Left colon (tissue), 2 donors: ENCODE measurements at regions of chr19 and their contacts with region 1.

Region 1: GRCh38 chr19:6292006-6292405 is 12.2 kb upstream of the MLLT1 start:
- DNase-seq: no peak
- ATAC-seq: no peak

Region 2: DNA sequence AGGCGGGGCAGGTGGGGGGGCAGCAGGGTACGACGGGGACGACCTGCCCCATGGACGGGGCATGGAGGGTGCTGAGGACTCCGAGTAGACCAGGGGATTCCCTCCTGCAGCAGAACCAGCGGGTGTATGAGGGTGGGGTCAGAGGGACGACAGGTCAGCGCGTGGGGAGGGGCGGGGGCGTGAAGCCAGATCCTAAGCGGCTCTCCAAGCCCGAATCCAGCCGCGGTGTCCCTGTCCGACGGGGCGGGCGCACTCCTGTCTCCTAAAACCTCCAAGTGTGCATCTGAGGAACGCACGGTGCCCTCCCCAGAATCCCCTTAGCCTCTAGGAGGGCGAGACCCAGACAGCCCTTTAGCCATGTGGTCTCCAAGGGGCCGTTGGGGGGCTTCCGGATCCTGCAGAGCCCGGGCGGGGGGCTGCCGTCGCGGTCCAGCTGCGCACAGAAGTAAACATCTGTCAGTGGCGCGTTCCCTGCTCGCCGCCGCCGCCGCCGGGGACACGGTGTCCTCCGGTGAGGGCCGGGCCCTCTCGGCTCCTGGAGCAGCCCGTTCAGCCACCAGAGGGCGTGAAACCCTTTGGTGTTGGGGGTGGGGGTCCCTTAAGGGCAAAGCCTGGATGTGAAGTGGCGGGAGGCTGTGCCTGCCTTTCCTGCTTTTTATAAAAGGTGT is 486.4 kb before region 1 on chr19:
- intact Hi-C with region 1: no loop called
- DNase-seq: peak; percentile 77 to 85
- ATAC-seq: peak; percentile 54

Region 3: GRCh38 chr19:6218491-6219162 is 73.4 kb before region 1 on chr19:
- intact Hi-C with region 1: loop called in 1 of 2 experiments (anchors 10 kb)
- DNase-seq: peak; percentile 76 to 89
- ATAC-seq: peak; percentile 82

Region 4: DNA sequence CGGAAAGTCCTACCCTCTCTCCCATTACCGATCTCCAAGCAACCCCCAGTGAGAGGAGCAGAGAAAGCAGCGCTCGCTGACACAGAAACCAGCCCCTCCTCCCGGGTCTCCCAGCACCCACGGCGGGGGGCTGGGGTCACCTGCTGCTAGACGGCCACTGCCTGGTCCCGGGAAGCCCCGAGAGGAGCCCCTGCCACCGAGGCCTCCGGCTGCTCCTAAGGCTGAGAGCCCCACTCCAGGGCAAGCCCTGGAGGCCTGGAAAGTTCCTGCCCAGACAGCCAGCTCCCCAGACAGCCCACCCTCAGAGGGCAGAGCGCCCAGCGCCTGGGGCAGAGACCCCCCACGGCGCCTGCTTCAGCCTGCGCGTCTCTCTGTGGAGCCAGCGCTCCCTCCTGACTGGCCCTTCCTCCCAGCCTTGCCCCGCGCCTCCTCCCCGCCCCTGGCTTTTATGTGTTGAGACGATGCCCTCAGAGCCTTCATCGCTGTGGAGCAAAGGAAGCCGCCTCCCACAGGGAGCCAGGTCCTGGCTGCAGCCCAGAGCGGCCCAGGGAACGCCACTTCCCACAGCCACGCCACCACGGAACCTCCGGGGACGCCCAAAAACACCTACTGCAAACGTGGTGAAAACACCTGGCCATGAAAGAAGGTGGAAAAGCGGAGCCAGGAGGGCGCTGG is 63.3 kb before region 1 on chr19:
- intact Hi-C with region 1: no loop called
- DNase-seq: no peak
- ATAC-seq: no peak

Region 5: GRCh38 chr19:6238643-6239281 is 53.2 kb before region 1 on chr19:
- intact Hi-C with region 1: no loop called
- DNase-seq: no peak
- ATAC-seq: no peak

Region 6: GRCh38 chr19:6450166-6450565 is 158.2 kb after region 1 on chr19:
- intact Hi-C with region 1: no loop called
- DNase-seq: no peak
- ATAC-seq: no peak